ENCODE measurements at regions of chr7 and their contacts with region 1.

Region 1: GRCh38 chr7:33814400-33814799 is 90.9 kb upstream of the BMPER start:
- DNase-seq: no peak
- H3K4me3 ChIP-seq: peak overlapping the region; percentile 32 to 59
- H3K27ac ChIP-seq: peak overlapping the region; percentile 52 to 67
- H3K4me1 ChIP-seq: peaks cover 4 to 13% of the 10 kb centered on the region in 2 donors
- H3K27me3 ChIP-seq: no peaks in the 10 kb centered on the region
- CTCF ChIP-seq: no peak

Region 2: GRCh38 chr7:33789871-33790630 is 24.3 kb before region 1 on chr7:
- intact Hi-C with region 1: no loop called
- DNase-seq: no peak
- H3K4me3 ChIP-seq: no peak overlapping the region
- H3K27ac ChIP-seq: no peak overlapping the region
- H3K4me1 ChIP-seq: no peaks in the 10 kb centered on the region
- H3K27me3 ChIP-seq: no peaks in the 10 kb centered on the region
- CTCF ChIP-seq: no peak

Region 3: DNA sequence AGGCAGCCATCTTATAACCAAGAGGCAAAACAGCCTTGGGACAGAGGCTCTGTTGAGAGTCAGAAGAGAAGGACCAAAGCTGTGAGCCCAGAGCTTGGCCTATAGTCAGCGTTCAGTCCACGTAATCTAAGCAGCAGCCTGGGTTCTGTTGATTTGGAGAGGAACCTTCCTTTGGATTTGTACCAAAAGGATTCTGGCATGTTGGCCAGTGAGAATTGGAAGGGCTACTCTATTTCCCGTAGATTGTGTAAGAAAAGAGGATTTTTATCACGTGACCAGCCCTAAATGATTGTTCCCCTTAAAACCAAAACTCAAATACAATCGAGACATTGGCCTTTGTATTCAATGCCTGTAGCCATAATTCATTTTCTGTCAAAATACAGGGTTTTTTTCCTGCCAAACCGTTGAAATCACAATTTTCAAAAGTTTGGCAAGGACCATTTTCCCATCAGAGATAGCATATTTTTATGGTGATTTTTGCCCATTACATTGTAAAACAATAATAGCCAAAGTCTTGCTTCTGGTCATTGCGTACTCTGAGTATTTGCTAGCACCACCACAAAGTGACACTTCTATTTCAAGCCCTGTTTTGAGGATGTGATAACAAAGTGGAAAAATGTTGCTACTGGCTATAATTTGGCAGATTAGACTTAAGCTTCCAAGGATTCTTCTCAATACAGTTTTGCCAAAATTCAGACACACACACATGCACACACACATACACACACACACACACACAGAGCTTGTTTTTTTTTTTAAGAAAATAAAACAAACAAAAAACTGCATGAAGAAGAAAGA is 67.8 kb after region 1 on chr7:
- intact Hi-C with region 1: loop called (anchors 5 kb)
- DNase-seq: peak in 1 of 2 donors; percentile 77
- H3K4me3 ChIP-seq: no peak overlapping the region
- H3K27ac ChIP-seq: peak overlapping the region; percentile 14 to 57
- H3K4me1 ChIP-seq: peaks cover 0 to 10% of the 10 kb centered on the region in 2 donors
- H3K27me3 ChIP-seq: no peaks in the 10 kb centered on the region
- CTCF ChIP-seq: no peak

Measured in ascending aorta (tissue), 2 donors.